Caco-2 (cell line): ENCODE measurements at regions of chr7 and their contacts with region 1.

Region 1: GRCh38 chr7:75854233-75854632 is 24.6 kb upstream of the RHBDD2 start:
- DNase-seq: no peak
- H3K4me3 ChIP-seq: no peak overlapping the region
- H3K4me3 Mint-ChIP-seq: no peak overlapping the region
- H3K27ac Mint-ChIP-seq: no peak overlapping the region
- H3K4me1 ChIP-seq: no peaks in the 10 kb centered on the region
- H3K4me1 Mint-ChIP-seq: no peaks in the 10 kb centered on the region
- H3K27me3 ChIP-seq: no peaks in the 10 kb centered on the region
- H3K27me3 Mint-ChIP-seq: no peaks in the 10 kb centered on the region
- CTCF ChIP-seq: no peak

Region 2: GRCh38 chr7:75669579-75669978 is 184.7 kb before region 1 on chr7:
- CTCF ChIA-PET with region 1: interaction called, 18 read pairs
- POLR2A ChIA-PET with region 1: no interaction called
- intact Hi-C with region 1: no loop called
- DNase-seq: no peak
- H3K4me3 ChIP-seq: no peak overlapping the region
- H3K4me3 Mint-ChIP-seq: no peak overlapping the region
- H3K27ac Mint-ChIP-seq: no peak overlapping the region
- H3K4me1 ChIP-seq: no peaks in the 10 kb centered on the region
- H3K4me1 Mint-ChIP-seq: no peaks in the 10 kb centered on the region
- H3K27me3 ChIP-seq: no peaks in the 10 kb centered on the region
- H3K27me3 Mint-ChIP-seq: no peaks in the 10 kb centered on the region
- CTCF ChIP-seq: no peak